Activated naive CD4-positive, alpha-beta T cell treated with anti-CD3 and anti-CD28 coated beads, Interleukin-2, amount 10 ng/mL, durations not matched to agents 7 days and 5 days (primary cell): ENCODE measurements at regions of chr19 and their contacts with region 1.

Region 1: DNA sequence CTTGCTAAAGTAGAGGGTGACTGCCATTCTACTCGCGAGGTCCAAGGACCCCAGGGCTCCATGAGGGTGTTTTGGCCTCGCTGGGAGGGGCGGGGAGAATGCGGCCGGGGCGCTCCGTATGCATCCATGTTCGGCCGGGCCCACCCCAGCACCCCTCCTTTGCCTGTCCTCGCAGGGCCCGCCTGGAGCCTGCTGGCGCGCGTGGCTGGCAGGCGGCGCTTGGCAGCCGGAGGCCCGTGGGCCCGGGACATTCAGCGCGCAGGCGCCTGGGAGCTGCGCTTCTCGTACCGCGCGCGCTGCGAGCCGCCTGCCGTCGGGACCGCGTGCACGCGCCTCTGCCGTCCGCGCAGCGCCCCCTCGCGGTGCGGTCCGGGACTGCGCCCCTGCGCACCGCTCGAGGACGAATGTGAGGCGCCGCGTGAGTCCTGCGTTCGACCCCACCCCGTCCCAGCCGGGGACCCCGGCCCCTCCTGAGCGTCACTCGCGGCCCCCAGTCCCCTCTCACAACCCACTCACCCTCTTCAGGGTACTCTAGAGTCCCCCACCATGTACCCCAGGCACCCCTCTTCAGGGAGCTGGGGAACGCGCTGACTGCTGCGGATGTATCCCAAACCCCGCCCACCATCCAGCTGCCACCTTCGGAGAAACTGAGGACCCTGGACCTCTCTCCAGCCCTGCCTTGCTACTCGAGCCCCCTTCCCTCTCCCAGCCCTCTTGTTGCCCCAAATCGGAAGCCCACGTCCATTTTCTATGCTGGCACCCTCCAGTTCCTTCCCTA is 4.1 kb downstream of the DLL3 start:
- DNase-seq: peak; percentile 78
- H3K4me3 Mint-ChIP-seq: peak overlapping the region; percentile 40
- H3K27ac Mint-ChIP-seq: no peak overlapping the region
- H3K4me1 Mint-ChIP-seq: peaks cover 39% of the 10 kb centered on the region
- H3K27me3 Mint-ChIP-seq: peaks cover 87% of the 10 kb centered on the region

Region 2: DNA sequence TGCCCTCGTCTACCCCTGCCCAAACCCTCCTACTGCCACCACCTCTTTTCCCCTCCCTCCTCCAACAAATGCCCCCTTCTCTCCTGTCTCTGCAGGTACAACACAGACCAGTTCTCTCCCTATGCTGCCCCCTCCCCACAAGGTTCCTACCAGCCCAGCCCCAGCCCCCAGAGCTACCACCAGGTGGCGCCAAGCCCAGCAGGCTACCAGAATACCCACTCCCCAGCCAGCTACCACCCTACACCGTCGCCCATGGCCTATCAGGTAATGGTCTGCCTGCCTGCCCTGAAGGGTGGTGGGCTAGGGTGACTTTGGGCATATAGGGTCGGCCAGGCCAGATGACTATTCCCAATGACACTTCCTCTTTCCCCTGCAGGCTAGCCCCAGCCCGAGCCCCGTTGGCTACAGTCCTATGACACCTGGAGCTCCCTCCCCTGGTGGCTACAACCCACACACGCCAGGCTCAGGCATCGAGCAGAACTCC is 28.6 kb before region 1 on chr19:
- CTCF ChIA-PET with region 1: interaction called, 10 read pairs
- DNase-seq: peak; percentile 81
- H3K4me3 Mint-ChIP-seq: no peak overlapping the region
- H3K27ac Mint-ChIP-seq: peak overlapping the region; percentile 45
- H3K4me1 Mint-ChIP-seq: peaks cover 2% of the 10 kb centered on the region
- H3K27me3 Mint-ChIP-seq: no peaks in the 10 kb centered on the region

Region 3: GRCh38 chr19:39514840-39515550 is 12.2 kb after region 1 on chr19 and contains the start of gene SELENOV:
- CTCF ChIA-PET with region 1: interaction called, 11 read pairs
- DNase-seq: peak; percentile 37
- H3K4me3 Mint-ChIP-seq: peak within 1 kb of the TSS; percentile 33
- H3K27ac Mint-ChIP-seq: no peak within 1 kb of the TSS
- H3K4me1 Mint-ChIP-seq: peaks cover 10% of the 10 kb centered on the region
- H3K27me3 Mint-ChIP-seq: peaks cover 90% of the 10 kb centered on the region

Region 4: DNA sequence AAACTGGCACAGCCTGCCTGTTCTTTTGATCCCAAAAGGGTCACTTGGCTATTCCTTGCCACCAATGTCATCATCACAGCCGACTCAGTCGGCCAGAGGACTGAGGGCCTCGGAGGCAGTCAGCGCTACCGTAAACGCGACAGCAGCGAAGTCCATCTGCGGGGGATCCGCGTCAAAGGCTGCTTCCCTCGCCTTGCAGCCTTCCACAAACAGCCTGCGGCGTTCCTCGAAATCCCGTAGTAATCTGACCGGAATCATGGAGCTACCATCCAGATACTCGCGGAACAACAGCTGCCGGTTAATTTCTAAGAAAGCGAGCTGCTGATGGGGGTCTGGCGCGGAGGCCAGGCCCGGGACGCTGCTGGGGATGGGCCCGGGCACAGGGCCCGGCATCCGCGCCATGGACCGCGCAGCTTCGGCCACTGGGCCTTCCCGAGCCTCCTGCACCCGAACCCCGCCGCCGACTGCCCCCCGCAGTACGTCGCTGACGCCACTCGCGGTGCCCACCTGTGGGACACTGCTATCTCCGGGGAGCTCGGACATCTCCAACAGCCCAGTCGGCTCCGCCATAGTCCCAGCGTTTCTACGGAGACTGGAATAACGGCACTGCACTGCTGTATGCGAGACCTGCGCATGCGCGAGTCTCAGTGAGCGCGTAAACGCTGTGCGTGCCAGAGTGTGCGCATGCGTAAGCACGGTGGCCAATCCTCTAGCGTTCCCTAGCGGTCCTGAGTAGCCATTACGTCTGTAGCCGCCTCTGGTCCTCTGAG is 29.6 kb after region 1 on chr19 and contains the start of gene EID2B:
- CTCF ChIA-PET with region 1: interaction called, 10 read pairs
- DNase-seq: peak; percentile 96
- H3K4me3 Mint-ChIP-seq: peak within 1 kb of the TSS; percentile 89
- H3K27ac Mint-ChIP-seq: peak within 1 kb of the TSS; percentile 78
- H3K4me1 Mint-ChIP-seq: peaks cover 29% of the 10 kb centered on the region
- H3K27me3 Mint-ChIP-seq: no peaks in the 10 kb centered on the region